ENCODE measurements at regions of chr7 and their contacts with region 1.

Region 1: GRCh38 chr7:12490117-12490688 is 80.3 kb upstream of the SCIN start:
- DNase-seq: peak; percentile 36
- ATAC-seq: peak; percentile 59
- H3K4me3 ChIP-seq: no peak overlapping the region
- H3K27ac ChIP-seq: no peak overlapping the region
- H3K4me1 ChIP-seq: no peaks in the 10 kb centered on the region
- H3K27me3 ChIP-seq: no peaks in the 10 kb centered on the region
- CTCF ChIP-seq: peak; percentile 59
- POLR2A ChIP-seq: no peak
- RAD21 ChIP-seq: peak; percentile 51

Region 2: DNA sequence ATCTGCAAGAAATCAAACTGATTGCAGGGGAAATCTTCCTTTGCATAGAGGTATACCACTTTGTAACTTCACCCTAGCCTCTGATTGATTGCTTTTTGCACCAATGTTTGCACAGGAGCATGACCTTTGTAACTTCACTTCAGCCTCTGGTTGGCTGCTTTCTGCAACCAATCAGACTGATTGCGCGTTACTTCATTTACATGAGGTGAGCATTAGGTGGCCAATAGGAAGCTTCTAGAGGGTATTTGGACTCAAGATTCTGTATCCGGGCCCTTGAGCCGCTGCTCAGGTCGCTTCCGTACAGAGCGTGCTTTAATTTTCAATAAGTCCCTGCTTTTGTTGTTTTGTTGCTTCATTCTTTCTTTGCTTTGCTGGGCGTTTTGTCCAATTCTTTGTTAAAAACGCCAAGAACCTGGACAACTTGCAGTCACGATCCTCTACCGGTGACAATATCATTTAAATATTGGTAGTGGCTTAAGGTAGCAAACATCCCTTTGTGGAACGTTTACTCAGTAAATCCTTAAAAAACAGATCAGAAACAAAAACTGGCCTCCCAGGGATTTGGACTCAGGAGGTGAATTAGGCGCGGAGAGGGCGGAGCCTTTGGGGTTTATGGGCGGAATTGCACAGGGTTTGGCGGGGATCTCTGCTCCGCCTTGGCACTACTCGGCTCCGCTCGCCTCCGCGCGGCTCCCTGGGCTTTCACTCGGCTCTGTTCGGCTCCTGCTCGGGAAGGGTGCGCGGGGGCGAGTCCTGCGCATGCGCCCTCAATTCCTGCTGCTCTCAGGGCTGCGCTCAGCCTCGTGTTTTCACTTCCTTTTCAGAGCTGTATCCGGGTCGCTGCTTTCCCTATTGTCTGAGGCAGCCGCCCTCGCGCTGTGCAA is 1516.9 kb before region 1 on chr7 and contains the start of gene PHF14:
- CTCF ChIA-PET with region 1: no interaction called
- POLR2A ChIA-PET with region 1: no interaction called
- dilution Hi-C with region 1: no loop called
- in situ Hi-C with region 1: no loop called
- intact Hi-C with region 1: no loop called
- DNase-seq: peak; percentile 94
- ATAC-seq: peak; percentile 98
- H3K4me3 ChIP-seq: peak within 1 kb of the TSS; percentile 75
- H3K27ac ChIP-seq: peak within 1 kb of the TSS; percentile 58
- H3K4me1 ChIP-seq: no peaks in the 10 kb centered on the region
- H3K27me3 ChIP-seq: no peaks in the 10 kb centered on the region
- CTCF ChIP-seq: no peak
- POLR2A ChIP-seq: peak; percentile 81
- RAD21 ChIP-seq: no peak
- total RNA-seq, gene PHF14: 17.2 and 24.4 TPM in 2 replicates

Region 3: GRCh38 chr7:11427686-11428273 is 1062.4 kb before region 1 on chr7:
- CTCF ChIA-PET with region 1: no interaction called
- POLR2A ChIA-PET with region 1: no interaction called
- dilution Hi-C with region 1: no loop called
- in situ Hi-C with region 1: loop called (anchors 25 kb)
- intact Hi-C with region 1: no loop called
- DNase-seq: peak; percentile 56
- ATAC-seq: peak; percentile 73
- H3K4me3 ChIP-seq: no peak overlapping the region
- H3K27ac ChIP-seq: no peak overlapping the region
- H3K4me1 ChIP-seq: no peaks in the 10 kb centered on the region
- H3K27me3 ChIP-seq: no peaks in the 10 kb centered on the region
- CTCF ChIP-seq: peak; percentile 68
- POLR2A ChIP-seq: no peak
- RAD21 ChIP-seq: peak; percentile 64

Region 4: GRCh38 chr7:11831736-11832495 is 658.3 kb before region 1 on chr7 and contains the start of gene THSD7A:
- CTCF ChIA-PET with region 1: interaction called, 3 read pairs
- POLR2A ChIA-PET with region 1: no interaction called
- dilution Hi-C with region 1: no loop called
- in situ Hi-C with region 1: loop called (anchors 25 kb)
- intact Hi-C with region 1: loop called (anchors 2 kb)
- DNase-seq: peak; percentile 13
- ATAC-seq: peak; percentile 97
- H3K4me3 ChIP-seq: peak within 1 kb of the TSS; percentile 61
- H3K27ac ChIP-seq: no peak within 1 kb of the TSS
- H3K4me1 ChIP-seq: no peaks in the 10 kb centered on the region
- H3K27me3 ChIP-seq: peaks cover 11% of the 10 kb centered on the region
- CTCF ChIP-seq: no peak
- POLR2A ChIP-seq: no peak
- RAD21 ChIP-seq: no peak
- total RNA-seq, gene THSD7A: under 0.01 and 0.18 TPM in 2 replicates

Region 5: GRCh38 chr7:12350971-12351370 is 139.2 kb before region 1 on chr7:
- CTCF ChIA-PET with region 1: no interaction called
- POLR2A ChIA-PET with region 1: no interaction called
- dilution Hi-C with region 1: no loop called
- in situ Hi-C with region 1: no loop called
- intact Hi-C with region 1: no loop called
- DNase-seq: no peak
- ATAC-seq: no peak
- H3K4me3 ChIP-seq: no peak overlapping the region
- H3K27ac ChIP-seq: no peak overlapping the region
- H3K4me1 ChIP-seq: no peaks in the 10 kb centered on the region
- H3K27me3 ChIP-seq: no peaks in the 10 kb centered on the region
- CTCF ChIP-seq: no peak
- POLR2A ChIP-seq: no peak
- RAD21 ChIP-seq: no peak

Region 6: DNA sequence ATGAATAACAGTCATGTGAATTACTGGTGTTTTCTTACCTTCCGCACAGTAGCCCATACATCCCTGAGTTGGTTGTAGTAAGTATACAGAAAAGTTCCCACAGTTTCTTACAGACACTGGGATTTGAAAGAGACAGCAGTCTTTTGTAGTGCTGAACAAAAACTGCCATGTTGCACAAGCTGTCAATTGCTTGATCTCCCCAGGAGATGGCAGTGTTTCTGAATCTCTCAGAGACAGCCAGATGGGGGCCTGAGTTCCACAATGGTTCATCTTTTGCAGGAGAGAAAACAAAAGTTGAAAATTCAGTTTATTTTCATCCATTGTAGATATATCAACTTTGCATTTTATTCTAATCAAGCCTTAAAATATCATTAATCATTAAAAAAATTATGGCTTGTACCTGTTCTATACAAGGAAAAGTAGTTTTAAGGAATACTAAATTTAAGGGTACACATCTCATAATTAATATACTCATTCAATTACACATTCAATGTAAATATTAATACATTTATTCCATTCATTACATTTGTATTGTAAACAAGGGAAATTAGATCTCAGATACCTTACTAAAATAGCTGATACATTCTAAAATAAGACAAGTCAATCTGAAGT is 101.0 kb before region 1 on chr7:
- CTCF ChIA-PET with region 1: no interaction called
- POLR2A ChIA-PET with region 1: no interaction called
- dilution Hi-C with region 1: no loop called
- in situ Hi-C with region 1: loop called (anchors 25 kb)
- intact Hi-C with region 1: loop called (anchors 2 kb)
- DNase-seq: peak; percentile 61
- ATAC-seq: peak; percentile 76; the same call in 1 of the 2 replicates
- H3K4me3 ChIP-seq: no peak overlapping the region
- H3K27ac ChIP-seq: no peak overlapping the region
- H3K4me1 ChIP-seq: no peaks in the 10 kb centered on the region
- H3K27me3 ChIP-seq: no peaks in the 10 kb centered on the region
- CTCF ChIP-seq: peak; percentile 73
- POLR2A ChIP-seq: no peak
- RAD21 ChIP-seq: peak; percentile 52

Region 7: GRCh38 chr7:12431886-12432556 is 58.2 kb before region 1 on chr7:
- CTCF ChIA-PET with region 1: interaction called, 7 read pairs
- POLR2A ChIA-PET with region 1: no interaction called
- dilution Hi-C with region 1: no loop called
- in situ Hi-C with region 1: no loop called
- intact Hi-C with region 1: loop called (anchors 2 kb)
- DNase-seq: peak; percentile 53
- ATAC-seq: peak; percentile 42
- H3K4me3 ChIP-seq: no peak overlapping the region
- H3K27ac ChIP-seq: no peak overlapping the region
- H3K4me1 ChIP-seq: no peaks in the 10 kb centered on the region
- H3K27me3 ChIP-seq: no peaks in the 10 kb centered on the region
- CTCF ChIP-seq: no peak
- POLR2A ChIP-seq: no peak
- RAD21 ChIP-seq: no peak

Region 8: DNA sequence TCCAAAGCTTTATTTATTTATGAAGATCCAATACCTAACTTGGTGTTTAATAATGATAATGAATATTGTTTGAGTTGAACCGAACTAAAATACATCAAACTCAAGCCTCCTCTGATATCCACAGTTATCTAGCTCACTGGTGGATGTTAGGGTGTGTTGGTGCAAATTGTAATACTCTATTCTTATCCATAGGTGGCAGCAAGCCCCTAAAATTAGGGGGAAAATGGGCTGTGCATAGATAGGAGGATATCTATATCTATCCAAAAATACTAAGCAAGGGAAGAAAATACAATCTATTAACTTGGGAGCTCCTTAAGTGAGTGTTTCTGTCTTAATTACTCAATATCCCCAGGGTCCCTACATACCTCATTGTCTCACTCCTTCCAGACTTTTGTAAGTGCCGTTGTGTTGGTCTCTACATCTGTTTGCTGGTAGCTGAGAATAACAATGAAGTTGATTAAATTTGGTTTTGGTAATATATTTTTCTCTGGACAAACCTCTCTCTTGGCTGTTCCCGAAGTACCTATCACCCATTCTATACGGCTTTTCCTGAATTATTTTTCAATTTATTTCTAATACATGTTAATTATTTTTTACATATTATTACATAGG is 31.6 kb before region 1 on chr7:
- CTCF ChIA-PET with region 1: interaction called, 31 read pairs
- POLR2A ChIA-PET with region 1: no interaction called
- dilution Hi-C with region 1: no loop called
- in situ Hi-C with region 1: no loop called
- intact Hi-C with region 1: loop called (anchors 1 kb)
- DNase-seq: peak; percentile 25
- ATAC-seq: peak; percentile 96
- H3K4me3 ChIP-seq: no peak overlapping the region
- H3K27ac ChIP-seq: no peak overlapping the region
- H3K4me1 ChIP-seq: no peaks in the 10 kb centered on the region
- H3K27me3 ChIP-seq: no peaks in the 10 kb centered on the region
- CTCF ChIP-seq: peak; percentile 76
- POLR2A ChIP-seq: no peak
- RAD21 ChIP-seq: peak; percentile 73